ENCODE measurements at regions of chr5 and their contacts with region 1.

Region 1: GRCh38 chr5:435961-436640 is 6.9 kb upstream of the EXOC3 start:
- DNase-seq: peak; percentile 73

Region 2: GRCh38 chr5:321230-321725 is 114.8 kb before region 1 on chr5 and contains the start of gene AHRR:
- intact Hi-C with region 1: loop called in 1 of 2 experiments (anchors 5 kb)
- DNase-seq: no peak
- total RNA-seq, gene AHRR: 0.69 to 2.9 TPM